ENCODE measurements at regions of chr22 and their contacts with region 1.

Region 1: DNA sequence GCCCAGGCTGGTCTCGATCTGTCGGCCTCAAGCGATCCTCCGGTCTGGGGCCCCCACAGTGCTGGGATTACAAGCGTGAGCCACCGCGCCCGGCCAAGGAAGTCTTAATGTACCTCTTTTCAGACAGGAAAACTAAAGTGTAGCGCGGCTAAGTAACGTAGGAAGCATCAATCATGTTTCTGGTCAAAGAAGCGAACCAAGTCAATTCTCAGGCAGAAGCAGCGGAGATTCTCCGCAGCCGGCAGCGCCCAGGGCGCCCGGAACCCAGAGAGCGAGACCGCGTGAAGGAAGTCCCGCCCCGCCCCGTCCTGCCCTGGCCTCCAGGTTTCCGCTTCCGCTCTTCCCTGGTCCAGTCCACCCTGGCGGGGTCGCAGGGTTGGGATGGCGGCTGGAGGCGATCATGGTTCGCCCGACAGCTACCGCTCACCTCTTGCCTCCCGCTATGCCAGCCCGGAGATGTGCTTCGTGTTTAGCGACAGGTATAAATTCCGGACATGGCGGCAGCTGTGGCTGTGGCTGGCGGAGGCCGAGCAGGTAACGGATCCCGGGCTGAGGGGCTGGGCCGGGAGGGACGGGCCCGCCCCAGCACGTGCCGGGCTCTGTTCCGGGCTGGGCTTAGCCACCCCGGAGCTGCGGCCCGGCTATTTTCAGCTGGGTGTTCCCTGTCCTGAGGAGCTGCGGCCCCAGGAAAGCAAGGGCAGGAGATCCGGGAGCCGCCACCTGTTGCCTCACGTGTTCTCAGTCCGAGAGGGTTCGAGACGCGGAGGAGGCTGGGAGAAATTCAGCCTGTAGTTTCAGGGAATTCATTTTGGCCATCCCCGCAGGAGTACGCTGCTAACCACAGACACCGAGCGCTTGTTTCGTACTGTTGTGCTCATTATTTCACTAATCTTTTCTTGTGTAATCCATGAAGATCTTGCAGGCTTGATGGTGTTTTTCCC is at the start of gene ADSL:
- DNase-seq: peak; percentile 86
- H3K4me3 Mint-ChIP-seq: peak within 1 kb of the TSS; percentile 93
- H3K27ac Mint-ChIP-seq: peak within 1 kb of the TSS; percentile 87
- H3K4me1 Mint-ChIP-seq: peaks cover 23% of the 10 kb centered on the region
- H3K27me3 Mint-ChIP-seq: no peaks in the 10 kb centered on the region
- CTCF ChIP-seq: no peak
- total RNA-seq, gene ADSL: 91.6 and 129 TPM in 2 replicates

Region 2: GRCh38 chr22:39520054-39520891 is 826.2 kb before region 1 on chr22 and contains the start of gene ATF4:
- CTCF ChIA-PET with region 1: interaction called, 4 read pairs
- POLR2A ChIA-PET with region 1: interaction called, 22 read pairs
- intact Hi-C with region 1: no loop called
- DNase-seq: peak; percentile 98
- H3K4me3 Mint-ChIP-seq: peak within 1 kb of the TSS; percentile 93
- H3K27ac Mint-ChIP-seq: peak within 1 kb of the TSS; percentile 100
- H3K4me1 Mint-ChIP-seq: peaks cover 23% of the 10 kb centered on the region
- H3K27me3 Mint-ChIP-seq: no peaks in the 10 kb centered on the region
- CTCF ChIP-seq: no peak
- total RNA-seq, gene ATF4: 717 and 764 TPM in 2 replicates

Region 3: DNA sequence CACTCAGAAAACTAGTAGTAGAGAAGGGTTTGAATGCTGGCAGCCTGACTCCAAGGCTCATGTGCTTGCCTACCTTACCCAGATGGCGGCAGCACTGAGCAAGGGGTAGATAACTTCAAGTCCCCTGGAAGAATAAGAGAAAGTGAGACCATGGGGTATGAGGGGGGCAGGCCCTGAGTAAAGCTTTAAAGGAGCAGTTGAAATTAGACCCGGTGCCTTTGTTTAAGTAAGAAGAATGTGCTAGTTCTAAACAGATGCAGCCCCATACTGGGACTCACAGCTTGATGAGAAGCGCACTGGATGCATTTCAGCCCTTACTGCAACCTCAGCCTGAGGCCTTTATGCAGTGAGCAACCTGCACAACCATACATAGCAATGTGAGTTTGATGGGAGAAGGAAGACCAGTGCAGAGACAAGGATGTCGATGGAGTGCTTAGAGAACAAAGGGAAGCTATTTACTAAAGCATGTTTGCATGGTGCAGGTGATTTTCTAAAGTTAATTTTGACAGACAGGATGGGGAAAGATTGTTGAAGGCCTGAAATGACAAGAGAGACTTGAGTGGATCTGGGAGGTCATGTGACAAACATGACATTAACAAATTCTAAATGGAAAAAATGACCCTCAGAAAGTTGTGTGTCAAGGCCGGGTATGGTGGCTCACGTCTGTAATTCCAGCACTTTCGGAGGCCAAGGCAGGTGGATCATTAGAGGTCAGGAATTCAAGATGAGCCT is 413.4 kb before region 1 on chr22:
- CTCF ChIA-PET with region 1: no interaction called
- POLR2A ChIA-PET with region 1: no interaction called
- intact Hi-C with region 1: loop called (anchors 10 kb)
- DNase-seq: peak; percentile 66
- H3K4me3 Mint-ChIP-seq: no peak overlapping the region
- H3K27ac Mint-ChIP-seq: no peak overlapping the region
- H3K4me1 Mint-ChIP-seq: no peaks in the 10 kb centered on the region
- H3K27me3 Mint-ChIP-seq: peaks cover 20% of the 10 kb centered on the region
- CTCF ChIP-seq: peak; percentile 76

Region 4: DNA sequence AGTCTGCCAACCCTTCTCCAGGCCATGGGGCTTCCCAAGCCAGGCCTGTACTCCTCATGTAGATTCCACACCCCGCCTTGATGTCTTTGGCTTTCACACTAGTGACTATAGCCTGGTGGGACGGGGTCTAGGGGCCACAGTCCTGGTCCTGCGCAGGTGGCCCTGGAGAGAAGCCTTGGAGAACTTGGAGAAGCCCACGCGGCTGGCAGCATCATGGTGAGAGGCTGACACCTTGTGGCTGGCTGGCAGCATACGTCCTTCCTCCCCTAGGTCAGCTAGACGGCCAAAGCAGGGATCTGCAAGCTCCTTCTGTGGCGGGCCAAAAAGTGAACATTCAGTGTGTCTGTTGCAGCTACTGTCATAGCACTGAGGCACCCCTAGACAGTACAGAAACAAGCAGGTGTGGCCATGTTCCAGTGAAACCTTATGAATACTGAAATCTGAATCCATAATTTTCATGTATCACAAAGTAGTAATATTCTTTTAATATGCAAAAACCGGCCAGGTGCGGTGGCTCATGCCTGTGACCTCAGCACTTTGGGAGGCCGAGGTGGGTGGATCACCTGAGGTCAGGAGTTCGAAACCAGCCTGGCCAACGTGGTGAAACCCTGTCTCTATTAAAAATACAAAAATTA is 309.7 kb before region 1 on chr22:
- CTCF ChIA-PET with region 1: interaction called, 14 read pairs
- POLR2A ChIA-PET with region 1: interaction called, 174 read pairs
- intact Hi-C with region 1: no loop called
- DNase-seq: peak; percentile 77
- H3K4me3 Mint-ChIP-seq: no peak overlapping the region
- H3K27ac Mint-ChIP-seq: no peak overlapping the region
- H3K4me1 Mint-ChIP-seq: peaks cover 28% of the 10 kb centered on the region
- H3K27me3 Mint-ChIP-seq: no peaks in the 10 kb centered on the region
- CTCF ChIP-seq: peak; percentile 75

Region 5: GRCh38 chr22:40177738-40178416 is 168.6 kb before region 1 on chr22 and contains the start of gene TNRC6B:
- CTCF ChIA-PET with region 1: no interaction called
- POLR2A ChIA-PET with region 1: interaction called, 64 read pairs
- intact Hi-C with region 1: loop called (anchors 2 kb)
- DNase-seq: peak; percentile 98
- H3K4me3 Mint-ChIP-seq: peak within 1 kb of the TSS; percentile 67
- H3K27ac Mint-ChIP-seq: peak within 1 kb of the TSS; percentile 80
- H3K4me1 Mint-ChIP-seq: peaks cover 35% of the 10 kb centered on the region
- H3K27me3 Mint-ChIP-seq: no peaks in the 10 kb centered on the region
- CTCF ChIP-seq: no peak
- total RNA-seq, gene TNRC6B: 27.1 and 39.3 TPM in 2 replicates

Region 6: DNA sequence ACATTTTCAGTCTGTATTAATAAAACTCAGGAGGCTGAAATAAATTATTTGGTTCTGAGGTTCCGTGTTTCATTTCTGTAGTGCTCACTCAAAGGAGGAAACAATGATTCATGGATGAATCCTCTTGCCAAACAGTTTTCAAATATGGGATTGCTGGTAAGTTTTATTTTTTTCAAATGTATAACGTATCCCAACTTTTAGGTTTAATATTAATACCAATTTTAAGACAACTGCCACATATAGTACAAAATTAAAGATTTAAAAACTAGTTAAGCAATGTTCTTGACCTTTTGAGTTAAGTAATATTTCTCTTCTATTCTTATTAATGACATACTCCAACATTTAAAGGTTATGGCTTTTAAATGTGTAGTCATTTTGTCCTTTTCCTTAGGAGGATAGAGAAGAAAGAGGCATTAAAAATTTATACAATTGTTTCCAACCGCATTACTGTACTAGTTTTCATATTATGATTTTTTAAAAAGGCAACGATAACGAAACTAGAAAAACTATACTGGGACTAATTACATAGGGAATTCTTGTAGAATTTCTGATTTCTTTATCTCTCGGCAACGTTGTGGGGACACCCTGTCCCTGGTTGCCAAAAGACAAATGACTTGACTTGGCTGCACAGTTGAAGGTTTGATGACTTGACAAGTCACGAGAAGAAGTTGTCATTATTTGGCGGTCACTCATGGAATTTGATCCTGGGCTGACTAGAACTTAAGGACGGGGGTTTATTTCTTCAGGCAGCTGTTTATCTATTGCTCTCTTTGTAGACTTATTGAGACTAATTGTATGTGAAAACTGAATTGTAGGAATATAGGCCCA is 69.2 kb before region 1 on chr22:
- CTCF ChIA-PET with region 1: interaction called, 7 read pairs
- POLR2A ChIA-PET with region 1: interaction called, 10 read pairs
- intact Hi-C with region 1: no loop called
- DNase-seq: peak; percentile 43
- H3K4me3 Mint-ChIP-seq: peak overlapping the region; percentile 74
- H3K27ac Mint-ChIP-seq: peak overlapping the region; percentile 95
- H3K4me1 Mint-ChIP-seq: peaks cover 23% of the 10 kb centered on the region
- H3K27me3 Mint-ChIP-seq: no peaks in the 10 kb centered on the region
- CTCF ChIP-seq: no peak

Region 7: GRCh38 chr22:40367342-40367741 is 20.9 kb after region 1 on chr22:
- CTCF ChIA-PET with region 1: interaction called, 11 read pairs
- POLR2A ChIA-PET with region 1: interaction called, 9 read pairs
- intact Hi-C with region 1: no loop called
- DNase-seq: no peak
- H3K4me3 Mint-ChIP-seq: no peak overlapping the region
- H3K27ac Mint-ChIP-seq: no peak overlapping the region
- H3K4me1 Mint-ChIP-seq: peaks cover 5% of the 10 kb centered on the region
- H3K27me3 Mint-ChIP-seq: no peaks in the 10 kb centered on the region
- CTCF ChIP-seq: no peak

Measured in MCF 10A (cell line).